Activated naive CD4-positive, alpha-beta T cell treated with anti-CD3 and anti-CD28 coated beads for 36 hours (primary cell): ENCODE measurements at regions of chr15 and their contacts with region 1.

Region 1: GRCh38 chr15:64731012-64731806 is 44.2 kb downstream of the RBPMS2 start:
- DNase-seq: peak; percentile 94
- H3K4me3 Mint-ChIP-seq: no peak overlapping the region
- H3K27ac Mint-ChIP-seq: no peak overlapping the region
- H3K4me1 Mint-ChIP-seq: peaks cover 3% of the 10 kb centered on the region
- H3K27me3 Mint-ChIP-seq: peaks cover 3% of the 10 kb centered on the region

Region 2: GRCh38 chr15:64153480-64154367 is 577.5 kb before region 1 on chr15:
- CTCF ChIA-PET with region 1: no interaction called
- intact Hi-C with region 1: loop called (anchors 2 kb)
- DNase-seq: peak; percentile 96
- H3K4me3 Mint-ChIP-seq: peak overlapping the region; percentile 50
- H3K27ac Mint-ChIP-seq: peak overlapping the region; percentile 67
- H3K4me1 Mint-ChIP-seq: peaks cover 26% of the 10 kb centered on the region
- H3K27me3 Mint-ChIP-seq: peaks cover 11% of the 10 kb centered on the region

Region 3: GRCh38 chr15:64209680-64210334 is 521.4 kb before region 1 on chr15:
- CTCF ChIA-PET with region 1: interaction called, 4 read pairs
- intact Hi-C with region 1: loop called (anchors 1 kb)
- DNase-seq: peak; percentile 8
- H3K4me3 Mint-ChIP-seq: no peak overlapping the region
- H3K27ac Mint-ChIP-seq: no peak overlapping the region
- H3K4me1 Mint-ChIP-seq: peaks cover 3% of the 10 kb centered on the region
- H3K27me3 Mint-ChIP-seq: no peaks in the 10 kb centered on the region

Region 4: DNA sequence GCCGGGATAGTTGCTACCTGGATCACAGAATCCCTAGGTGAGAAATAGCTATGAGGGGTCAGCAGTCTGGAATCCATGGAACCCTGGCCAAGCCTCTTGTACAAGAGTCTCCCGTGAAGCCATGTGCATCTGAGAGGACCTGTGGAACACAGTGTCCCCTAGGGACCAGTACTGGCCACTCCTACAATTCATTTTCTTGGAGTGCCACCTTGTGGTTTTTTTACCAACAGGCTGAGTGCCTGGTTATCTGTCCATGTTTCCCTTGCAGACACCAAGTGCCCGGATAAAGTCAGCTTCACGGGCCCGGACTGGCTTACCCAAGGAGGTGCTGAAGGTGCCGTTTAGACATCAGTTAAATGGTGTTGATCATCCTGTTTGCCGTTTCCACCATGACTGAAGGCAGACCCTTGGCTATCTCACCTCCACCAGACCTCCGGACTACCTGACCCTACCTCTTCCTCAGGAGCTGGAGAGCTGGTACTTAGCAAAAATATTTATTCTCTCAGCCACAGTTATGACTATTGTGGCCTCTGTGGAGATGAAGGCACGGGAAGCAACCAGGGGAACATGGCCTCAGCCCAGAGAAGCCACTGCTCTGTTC is 49.7 kb before region 1 on chr15:
- CTCF ChIA-PET with region 1: interaction called, 205 read pairs
- intact Hi-C with region 1: loop called (anchors 1 kb)
- DNase-seq: peak; percentile 38
- H3K4me3 Mint-ChIP-seq: no peak overlapping the region
- H3K27ac Mint-ChIP-seq: no peak overlapping the region
- H3K4me1 Mint-ChIP-seq: peaks cover 2% of the 10 kb centered on the region
- H3K27me3 Mint-ChIP-seq: no peaks in the 10 kb centered on the region

Region 5: DNA sequence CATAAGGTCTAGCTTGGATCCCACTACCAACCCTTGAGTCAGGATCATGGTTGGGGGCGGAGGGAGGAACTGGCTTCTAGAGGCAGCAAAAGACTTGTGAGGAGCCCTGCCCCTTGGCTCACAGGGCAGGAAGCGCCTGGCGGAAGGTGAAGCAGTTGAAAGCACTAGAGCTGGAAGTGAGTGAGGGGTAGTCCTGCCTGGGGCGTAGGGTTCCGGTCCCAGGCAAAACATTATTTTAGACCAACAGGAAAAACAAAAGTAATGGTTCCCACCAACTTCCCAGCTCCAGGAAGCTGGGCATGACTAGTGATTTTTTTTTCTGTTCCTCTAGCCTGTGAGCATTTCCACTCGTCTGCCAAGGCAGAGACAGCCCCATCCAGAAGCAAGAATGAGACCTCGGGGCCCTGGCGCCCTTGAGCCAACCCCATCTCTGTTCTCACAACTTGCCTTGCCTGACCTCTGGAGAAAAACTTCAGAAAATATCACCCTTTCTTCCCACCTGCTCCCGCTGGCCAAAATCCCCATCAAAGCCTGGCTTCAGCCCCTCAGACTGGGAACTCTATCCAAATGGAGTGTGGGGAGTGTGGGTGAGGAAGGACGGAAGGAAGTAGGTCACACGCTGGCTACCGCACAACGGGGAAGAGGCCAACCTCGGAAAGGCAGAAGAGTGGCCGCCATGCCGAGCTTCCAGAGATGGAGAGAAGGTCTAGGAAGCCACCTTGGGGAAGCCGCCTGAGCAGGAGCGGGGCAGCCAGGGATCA is 13.3 kb before region 1 on chr15:
- CTCF ChIA-PET with region 1: interaction called, 10 read pairs
- intact Hi-C with region 1: no loop called
- DNase-seq: peak; percentile 56
- H3K4me3 Mint-ChIP-seq: no peak overlapping the region
- H3K27ac Mint-ChIP-seq: peak overlapping the region; percentile 41
- H3K4me1 Mint-ChIP-seq: peaks cover 19% of the 10 kb centered on the region
- H3K27me3 Mint-ChIP-seq: no peaks in the 10 kb centered on the region

Region 6: GRCh38 chr15:64905119-64905831 is 174.1 kb after region 1 on chr15:
- CTCF ChIA-PET with region 1: interaction called, 8 read pairs
- intact Hi-C with region 1: loop called (anchors 1 kb)
- DNase-seq: peak; percentile 89
- H3K4me3 Mint-ChIP-seq: peak overlapping the region; percentile 64
- H3K27ac Mint-ChIP-seq: peak overlapping the region; percentile 51
- H3K4me1 Mint-ChIP-seq: peaks cover 35% of the 10 kb centered on the region
- H3K27me3 Mint-ChIP-seq: no peaks in the 10 kb centered on the region

Region 7: GRCh38 chr15:65077981-65078352 is 346.8 kb after region 1 on chr15:
- CTCF ChIA-PET with region 1: no interaction called
- intact Hi-C with region 1: loop called (anchors 1 kb)
- DNase-seq: peak; percentile 70
- H3K4me3 Mint-ChIP-seq: no peak overlapping the region
- H3K27ac Mint-ChIP-seq: no peak overlapping the region
- H3K4me1 Mint-ChIP-seq: peaks cover 18% of the 10 kb centered on the region
- H3K27me3 Mint-ChIP-seq: peaks cover 29% of the 10 kb centered on the region

Region 8: DNA sequence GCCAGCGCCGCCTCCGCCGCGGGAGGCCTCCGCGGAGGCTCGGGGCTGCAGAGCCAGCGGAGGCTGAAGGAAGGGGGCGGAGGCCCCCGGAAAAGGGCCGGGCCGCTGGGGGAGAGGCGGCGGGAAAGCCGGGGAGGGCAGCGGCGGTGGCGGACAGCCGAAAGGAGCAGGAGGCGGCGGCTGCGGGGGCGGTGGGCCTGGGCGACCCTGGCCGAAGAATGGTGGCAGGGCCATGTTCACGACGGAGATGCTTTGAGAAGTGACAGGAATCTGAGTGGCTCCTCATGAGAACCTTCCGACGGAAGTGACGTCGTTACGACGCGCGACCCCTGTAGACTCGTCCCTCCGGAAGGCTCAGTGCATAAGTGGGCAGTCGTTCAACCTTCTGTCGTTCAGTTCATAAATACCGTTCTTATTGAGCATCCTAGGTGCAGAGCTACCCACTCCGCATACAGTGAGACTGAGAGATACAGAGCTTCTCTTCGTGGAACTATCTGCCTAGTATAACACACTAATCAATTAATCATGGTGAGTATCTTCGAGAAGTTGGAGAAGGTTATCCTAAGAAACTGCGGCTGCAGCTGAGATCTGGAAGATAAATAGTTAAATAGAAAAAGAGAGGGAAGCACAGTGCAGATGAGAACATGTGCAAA is 402.5 kb after region 1 on chr15 and contains the start of gene PDCD7:
- CTCF ChIA-PET with region 1: no interaction called
- intact Hi-C with region 1: no loop called
- DNase-seq: peak; percentile 90
- H3K4me3 Mint-ChIP-seq: peak within 1 kb of the TSS; percentile 85
- H3K27ac Mint-ChIP-seq: peak within 1 kb of the TSS; percentile 82
- H3K4me1 Mint-ChIP-seq: peaks cover 23% of the 10 kb centered on the region
- H3K27me3 Mint-ChIP-seq: no peaks in the 10 kb centered on the region
- total RNA-seq, gene PDCD7: 28.6 to 31.5 TPM

Region 9: DNA sequence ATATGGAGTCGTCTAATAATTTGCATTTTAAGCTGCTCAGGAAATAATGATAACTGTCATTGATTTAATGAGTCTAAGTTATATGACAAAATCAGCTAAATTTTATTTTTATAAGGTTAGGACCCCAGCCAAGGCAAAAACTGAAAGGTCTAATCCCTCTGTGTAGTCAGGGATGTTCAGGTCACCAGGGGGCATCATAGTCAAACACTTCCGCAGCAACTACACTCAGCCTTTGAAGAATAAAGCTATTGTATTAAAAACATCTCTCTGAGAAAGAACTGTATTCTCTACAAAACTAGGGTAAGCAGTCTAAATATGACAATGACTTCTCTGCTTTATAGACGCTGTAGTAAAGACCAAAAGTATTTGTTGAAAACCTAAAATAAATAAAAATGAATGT is 864.8 kb after region 1 on chr15:
- CTCF ChIA-PET with region 1: no interaction called
- intact Hi-C with region 1: no loop called
- DNase-seq: peak; percentile 17
- H3K4me3 Mint-ChIP-seq: no peak overlapping the region
- H3K27ac Mint-ChIP-seq: no peak overlapping the region
- H3K4me1 Mint-ChIP-seq: peaks cover 2% of the 10 kb centered on the region
- H3K27me3 Mint-ChIP-seq: no peaks in the 10 kb centered on the region